ENCODE measurements at regions of chr15 and their contacts with region 1.

Region 1: DNA sequence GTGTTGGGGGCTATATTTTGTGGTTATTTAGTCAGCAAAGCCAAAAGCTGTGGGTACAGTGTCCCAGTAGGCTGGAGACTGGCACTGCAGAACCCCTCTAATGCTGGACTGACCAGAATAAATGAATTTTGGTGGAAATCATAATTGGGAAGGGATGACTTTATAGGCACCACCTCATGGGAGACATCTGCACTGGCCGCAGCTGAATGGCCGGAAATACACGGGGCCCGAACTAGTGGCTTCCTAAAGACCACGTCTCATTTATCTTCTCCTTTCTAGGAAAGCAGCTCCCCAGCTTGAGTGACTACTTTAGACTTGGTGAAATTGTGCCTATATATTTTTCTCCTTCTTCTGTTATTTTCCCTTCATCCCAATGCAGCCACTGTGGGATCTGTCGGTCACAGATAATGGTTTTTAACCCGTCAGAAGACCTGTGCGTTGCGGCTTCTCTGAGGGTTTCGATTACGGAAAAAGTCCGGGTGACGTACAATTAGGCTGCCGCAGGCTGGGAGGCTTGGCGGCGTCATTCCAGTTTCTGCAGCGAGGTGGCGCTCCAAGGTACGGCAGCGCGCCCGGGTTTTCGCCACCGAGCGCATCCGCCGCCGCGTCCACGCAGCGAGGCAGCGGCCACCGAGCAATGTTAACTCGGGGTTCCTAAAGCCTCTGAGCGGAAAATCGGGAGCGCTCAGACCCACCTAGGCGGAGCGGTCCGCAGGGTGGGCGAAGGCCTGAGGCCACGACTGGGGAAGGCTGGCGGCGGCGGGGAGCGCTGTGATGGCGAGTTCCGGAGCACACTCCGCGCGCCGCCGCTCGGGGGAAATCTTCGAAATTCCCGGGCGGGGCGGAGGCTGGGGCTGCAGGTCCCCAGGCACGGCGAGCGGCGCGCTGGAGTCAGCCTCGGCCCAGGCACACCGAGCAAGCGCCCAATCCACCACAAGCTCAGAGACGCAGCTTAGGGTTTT is 26.3 kb downstream of the NR2F2 start:
- DNase-seq: peak; percentile 73 to 75
- H3K4me3 ChIP-seq: peak overlapping the region in 2 of 3 donors; percentile 58 to 64
- H3K27ac ChIP-seq: peak overlapping the region; percentile 30 to 75 (median 67)
- H3K4me1 ChIP-seq: peaks cover 21 to 53% of the 10 kb centered on the region in 2 donors
- H3K27me3 ChIP-seq: peaks cover 65% of the 10 kb centered on the region
- CTCF ChIP-seq: peak; percentile 76 to 98 (median 92)
- POLR2A ChIP-seq: no peak

Region 2: DNA sequence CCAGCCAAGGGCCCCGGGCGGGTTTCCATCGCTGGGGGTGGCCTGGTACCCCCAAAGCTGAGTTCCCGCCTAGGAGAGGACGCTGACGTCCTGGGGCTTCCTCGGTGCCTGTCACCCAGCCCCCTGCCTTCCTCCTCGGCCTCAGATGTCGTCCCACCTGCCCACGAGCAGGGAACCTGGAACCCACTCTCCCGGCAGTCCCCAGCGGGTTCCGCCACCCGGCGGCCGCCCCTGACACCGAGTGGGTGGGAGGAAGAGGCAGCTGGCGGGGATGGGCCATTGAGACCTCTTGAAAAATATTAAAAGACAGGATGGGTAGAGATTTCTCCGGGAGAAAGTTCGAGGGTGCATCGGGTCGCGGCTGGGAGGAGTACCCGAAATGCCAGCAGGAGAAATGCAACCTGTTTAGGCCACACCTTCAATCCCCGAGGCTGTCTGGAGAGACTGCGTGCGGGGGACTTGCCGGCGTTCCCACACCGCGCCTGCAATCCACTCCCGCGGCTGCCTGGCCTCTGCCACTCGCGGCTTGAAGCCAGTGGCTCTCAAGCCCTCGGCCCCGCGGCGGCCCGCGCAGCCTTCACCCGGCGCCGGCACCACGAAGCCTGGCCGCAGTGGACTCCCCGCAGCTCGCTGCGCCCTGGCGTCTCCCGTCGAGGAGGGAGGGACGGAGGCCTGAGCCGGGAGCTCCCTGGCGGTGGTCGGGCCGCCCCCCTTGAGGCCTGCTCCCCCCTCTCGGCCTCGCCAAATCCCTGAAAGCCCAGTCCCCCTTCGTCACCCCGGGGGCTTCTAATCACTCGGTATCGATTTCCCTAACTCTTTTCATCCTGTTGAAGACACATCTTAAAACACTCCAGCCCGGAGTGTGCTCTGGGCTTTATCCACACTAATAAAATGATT is 34.9 kb before region 1 on chr15:
- intact Hi-C with region 1: loop called (anchors 5 kb)
- DNase-seq: peak in 1 of 2 donors; percentile 7
- H3K4me3 ChIP-seq: peak overlapping the region in 2 of 3 donors; percentile 21 to 27
- H3K27ac ChIP-seq: peak overlapping the region; percentile 29 to 90 (median 72)
- H3K4me1 ChIP-seq: peaks cover 10 to 13% of the 10 kb centered on the region in 2 donors
- H3K27me3 ChIP-seq: peaks cover 14% of the 10 kb centered on the region
- CTCF ChIP-seq: no peak
- POLR2A ChIP-seq: no peak

Region 3: GRCh38 chr15:96409215-96410138 is 52.7 kb after region 1 on chr15:
- intact Hi-C with region 1: loop called (anchors 5 kb)
- DNase-seq: no peak
- H3K4me3 ChIP-seq: peak overlapping the region in 1 of 3 donors; percentile 11
- H3K27ac ChIP-seq: no peak overlapping the region
- H3K4me1 ChIP-seq: peaks cover 10 to 14% of the 10 kb centered on the region in 2 donors
- H3K27me3 ChIP-seq: peaks cover 44% of the 10 kb centered on the region
- CTCF ChIP-seq: no peak
- POLR2A ChIP-seq: no peak